CD8-positive, alpha-beta T cell (primary cell): ENCODE measurements at regions of chr4 and their contacts with region 1.

Region 1: GRCh38 chr4:100949350-100949935 is 397.9 kb downstream of the PPP3CA start:
- DNase-seq: no peak
- ATAC-seq: no peak
- H3K4me3 ChIP-seq: no peak overlapping the region
- H3K4me3 Mint-ChIP-seq: no peak overlapping the region
- H3K27ac ChIP-seq: no peak overlapping the region
- H3K27ac Mint-ChIP-seq: no peak overlapping the region
- H3K4me1 ChIP-seq: no peaks in the 10 kb centered on the region
- H3K4me1 Mint-ChIP-seq: no peaks in the 10 kb centered on the region
- H3K27me3 ChIP-seq: no peaks in the 10 kb centered on the region
- H3K27me3 Mint-ChIP-seq: peaks cover 9% of the 10 kb centered on the region
- CTCF ChIP-seq: no peak

Region 2: GRCh38 chr4:101730291-101731117 is 781.1 kb after region 1 on chr4:
- CTCF ChIA-PET with region 1: no interaction called
- POLR2A ChIA-PET with region 1: no interaction called
- intact Hi-C with region 1: loop called in 1 of 2 experiments (anchors 10 kb)
- DNase-seq: peak in 7 of 9 experiments; percentile 24 to 69 (median 48)
- ATAC-seq: peak; percentile 67
- H3K4me3 ChIP-seq: no peak overlapping the region
- H3K4me3 Mint-ChIP-seq: no peak overlapping the region
- H3K27ac ChIP-seq: no peak overlapping the region
- H3K27ac Mint-ChIP-seq: no peak overlapping the region
- H3K4me1 ChIP-seq: no peaks in the 10 kb centered on the region
- H3K4me1 Mint-ChIP-seq: no peaks in the 10 kb centered on the region
- H3K27me3 ChIP-seq: no peaks in the 10 kb centered on the region
- H3K27me3 Mint-ChIP-seq: peaks cover 5% of the 10 kb centered on the region
- CTCF ChIP-seq: peak; percentile 65